Panc1 (cell line): ENCODE measurements at regions of chr12 and their contacts with region 1.

Region 1: GRCh38 chr12:98686603-98687002 is 41.5 kb downstream of the APAF1 start:
- DNase-seq: no peak
- ATAC-seq: no peak
- H3K4me3 ChIP-seq: no peak overlapping the region
- H3K27ac ChIP-seq: no peak overlapping the region
- H3K4me1 ChIP-seq: no peaks in the 10 kb centered on the region
- H3K27me3 ChIP-seq: no peaks in the 10 kb centered on the region
- CTCF ChIP-seq: no peak

Region 2: DNA sequence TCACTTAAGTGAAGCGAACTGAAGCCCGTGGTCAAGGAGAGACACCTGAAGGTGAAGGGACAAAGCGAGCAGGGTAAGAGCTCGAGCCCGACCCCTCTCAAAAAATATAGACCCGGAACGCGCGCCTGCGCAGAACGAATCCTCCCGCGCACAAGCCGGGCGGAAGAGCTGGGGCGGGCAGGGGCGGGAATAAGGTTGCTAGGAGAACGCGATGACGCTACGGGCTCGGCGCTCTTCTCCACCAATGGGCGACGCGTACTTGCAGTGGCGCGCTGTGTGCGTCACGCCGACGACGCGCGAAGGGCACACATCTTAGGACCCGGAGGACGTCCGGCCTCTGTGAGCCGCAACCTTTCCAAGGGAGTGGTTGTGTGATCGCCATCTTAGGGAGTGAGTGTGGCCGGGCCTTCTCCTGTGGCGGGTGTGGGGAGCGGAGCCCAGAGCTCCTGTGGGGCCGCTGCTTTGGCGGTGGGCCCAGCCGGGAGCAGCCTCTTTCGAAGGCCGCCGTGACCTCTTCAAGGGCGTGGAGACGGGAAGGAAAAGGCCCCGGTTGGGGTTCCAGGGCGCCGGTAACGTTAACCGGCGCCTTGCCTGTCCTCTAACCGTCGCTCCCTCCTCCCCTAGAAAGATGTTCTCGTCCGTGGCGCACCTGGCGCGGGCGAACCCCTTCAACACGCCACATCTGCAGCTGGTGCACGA is 93.1 kb before region 1 on chr12 and contains the start of gene SLC25A3:
- CTCF ChIA-PET with region 1: no interaction called
- POLR2A ChIA-PET with region 1: interaction called, 10 read pairs
- in situ Hi-C with region 1: no loop called
- intact Hi-C with region 1: no loop called
- DNase-seq: peak; percentile 81
- ATAC-seq: peak; percentile 100
- H3K4me3 ChIP-seq: peak within 1 kb of the TSS; percentile 56 to 88
- H3K27ac ChIP-seq: peak within 1 kb of the TSS; percentile 98
- H3K4me1 ChIP-seq: peaks cover 16% of the 10 kb centered on the region
- H3K27me3 ChIP-seq: no peaks in the 10 kb centered on the region
- CTCF ChIP-seq: no peak
- total RNA-seq, gene SLC25A3: 469 TPM

Region 3: DNA sequence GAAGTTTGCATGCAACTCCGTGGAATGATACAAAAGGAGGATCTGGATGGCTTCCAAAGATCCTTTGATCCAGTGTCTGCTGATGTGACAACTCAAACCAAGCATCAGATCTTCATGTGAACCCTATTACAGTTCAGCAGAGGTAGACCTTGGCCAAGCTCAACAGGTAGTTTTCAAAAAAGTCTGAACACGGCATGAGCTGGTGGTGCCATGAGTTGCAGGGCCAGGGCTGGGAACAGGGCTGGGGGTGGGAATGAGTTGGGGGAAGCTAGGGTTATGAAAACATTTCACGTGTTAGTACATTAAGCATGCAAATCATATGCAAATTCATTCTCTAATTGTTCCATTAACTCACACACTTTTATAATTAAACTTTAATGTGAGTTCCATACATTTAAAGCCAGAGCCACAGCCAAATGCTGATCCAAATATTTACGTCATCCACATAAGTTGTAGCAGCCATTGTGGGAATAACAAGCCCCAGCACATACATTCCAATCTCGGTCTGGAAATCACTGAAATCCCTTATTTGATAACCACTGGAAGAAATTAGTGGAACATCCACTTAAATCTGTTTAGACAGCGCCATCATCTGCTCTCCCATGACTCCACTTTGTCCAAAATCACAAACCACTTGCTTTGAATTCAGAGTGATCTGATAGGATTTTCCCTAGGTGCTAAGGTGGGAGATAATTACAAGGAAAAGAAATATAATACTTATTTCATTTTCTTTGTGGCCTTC is 117.0 kb after region 1 on chr12:
- CTCF ChIA-PET with region 1: no interaction called
- POLR2A ChIA-PET with region 1: no interaction called
- in situ Hi-C with region 1: no loop called
- intact Hi-C with region 1: no loop called
- DNase-seq: no peak
- ATAC-seq: no peak
- H3K4me3 ChIP-seq: no peak overlapping the region
- H3K27ac ChIP-seq: no peak overlapping the region
- H3K4me1 ChIP-seq: no peaks in the 10 kb centered on the region
- H3K27me3 ChIP-seq: peaks cover 6% of the 10 kb centered on the region
- CTCF ChIP-seq: no peak